ENCODE measurements at regions of chr19 and their contacts with region 1.

Region 1: GRCh38 chr19:12596927-12597548 is 13.6 kb downstream of the ZNF490 start:
- DNase-seq: no peak

Region 2: GRCh38 chr19:12623361-12624022 is 26.5 kb after region 1 on chr19:
- intact Hi-C with region 1: loop called in 1 of 2 experiments (anchors 1 kb)
- DNase-seq: no peak

Measured in posterior vena cava (tissue), 2 donors.